ENCODE measurements at regions of chrX and their contacts with region 1.

Region 1: GRCh38 chrX:129726307-129727111 is 12.3 kb upstream of the XPNPEP2 start:
- DNase-seq: peak; percentile 36 to 63
- ATAC-seq: peak; percentile 87 to 97
- H3K4me3 ChIP-seq: no peak overlapping the region
- H3K27ac ChIP-seq: no peak overlapping the region
- H3K4me1 ChIP-seq: no peaks in the 10 kb centered on the region
- CTCF ChIP-seq: peak; percentile 76
- EP300 ChIP-seq: no peak
- POLR2A ChIP-seq: no peak
- RAD21 ChIP-seq: peak; percentile 89 to 94

Region 2: DNA sequence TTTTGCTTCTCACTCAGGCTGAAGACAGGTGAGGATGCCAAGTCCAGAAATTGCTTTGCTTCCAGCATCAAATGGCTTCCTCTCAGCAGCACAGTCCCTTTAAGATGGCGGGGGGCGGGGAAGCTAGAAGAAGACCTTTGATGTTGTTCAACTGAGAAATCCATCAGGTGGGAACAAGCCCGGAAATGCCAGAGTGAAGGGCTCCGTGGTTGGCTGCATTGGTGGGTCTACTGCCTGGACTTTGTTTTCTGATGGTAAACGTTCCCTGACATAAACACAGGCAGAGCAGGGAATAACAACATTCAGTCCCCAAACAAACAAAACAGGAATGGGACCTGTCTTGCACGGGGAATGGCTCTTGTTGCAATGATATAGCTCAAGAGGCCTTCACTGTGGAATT is 109.1 kb before region 1 on chrX:
- CTCF ChIA-PET with region 1: interaction called, 11 read pairs
- POLR2A ChIA-PET with region 1: no interaction called
- DNase-seq: no peak
- ATAC-seq: no peak
- H3K4me3 ChIP-seq: no peak overlapping the region
- H3K27ac ChIP-seq: no peak overlapping the region
- H3K4me1 ChIP-seq: no peaks in the 10 kb centered on the region
- CTCF ChIP-seq: no peak
- EP300 ChIP-seq: no peak
- POLR2A ChIP-seq: no peak
- RAD21 ChIP-seq: no peak

Region 3: GRCh38 chrX:129654419-129655165 is 71.9 kb before region 1 on chrX and contains the start of gene APLN:
- CTCF ChIA-PET with region 1: interaction called, 60 read pairs
- POLR2A ChIA-PET with region 1: no interaction called
- DNase-seq: peak; percentile 21 to 35
- ATAC-seq: peak; percentile 82 to 83
- H3K4me3 ChIP-seq: peak within 1 kb of the TSS; percentile 50
- H3K27ac ChIP-seq: peak within 1 kb of the TSS; percentile 55 to 87; a peak in 5 of 6 replicates
- H3K4me1 ChIP-seq: peaks cover 7% of the 10 kb centered on the region; the same call in 2 of the 3 replicates
- CTCF ChIP-seq: no peak
- EP300 ChIP-seq: no peak
- POLR2A ChIP-seq: no peak; the same call in 1 of the 2 replicates
- RAD21 ChIP-seq: no peak
- polyA plus RNA-seq, gene APLN: 0.15 and 0.18 TPM in 2 replicates

Region 4: GRCh38 chrX:129701624-129702069 is 24.9 kb before region 1 on chrX:
- CTCF ChIA-PET with region 1: interaction called, 17 read pairs
- POLR2A ChIA-PET with region 1: no interaction called
- DNase-seq: no peak
- ATAC-seq: no peak
- H3K4me3 ChIP-seq: no peak overlapping the region
- H3K27ac ChIP-seq: no peak overlapping the region
- H3K4me1 ChIP-seq: peaks cover 18% of the 10 kb centered on the region
- CTCF ChIP-seq: no peak
- EP300 ChIP-seq: no peak
- POLR2A ChIP-seq: no peak
- RAD21 ChIP-seq: no peak